ENCODE measurements at regions of chr19 and their contacts with region 1.

Region 1: DNA sequence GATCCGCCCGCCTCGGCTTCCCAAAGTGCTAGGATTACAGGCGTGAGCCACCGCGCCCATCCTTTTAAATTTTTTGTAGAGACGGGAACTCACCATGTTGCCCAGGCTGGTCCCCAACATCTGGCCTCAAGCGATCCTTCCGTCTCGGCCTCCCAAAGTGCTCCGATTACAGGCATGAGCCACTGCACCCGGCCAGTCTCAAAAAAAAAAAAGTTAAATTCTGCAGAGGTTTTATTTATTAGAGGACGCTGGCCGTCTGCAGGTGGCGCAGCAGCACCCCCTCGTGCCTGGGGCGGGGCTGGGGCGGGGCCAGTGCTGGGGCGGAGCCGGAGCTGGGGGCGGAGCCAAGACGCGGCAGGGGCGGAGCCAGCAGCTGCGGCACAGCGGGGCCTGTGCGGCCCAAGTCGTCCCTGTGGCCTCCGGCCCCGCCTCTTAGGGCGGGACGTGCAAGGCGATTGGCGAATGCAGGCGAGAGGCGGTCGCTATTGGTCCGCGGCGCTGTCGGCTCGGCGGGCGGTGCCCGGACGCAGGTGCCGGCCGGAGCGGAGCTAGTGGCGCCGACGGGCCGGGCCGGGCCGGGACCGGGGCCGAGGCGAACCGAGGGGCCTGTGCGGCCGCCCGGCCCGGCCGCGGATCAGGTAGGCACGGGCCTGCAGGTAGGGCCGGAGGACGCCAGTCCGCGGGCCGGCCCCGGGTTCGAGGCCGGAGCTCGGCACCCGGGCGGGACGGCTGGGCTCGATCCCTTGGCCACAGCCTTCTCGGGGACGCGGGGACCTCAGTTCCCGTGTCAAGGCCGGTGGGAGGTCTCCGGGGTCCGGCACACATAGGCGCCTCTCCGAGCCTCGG is at the start of gene MARCHF2:
- DNase-seq: peak; percentile 95
- H3K4me3 Mint-ChIP-seq: peak within 1 kb of the TSS; percentile 56
- H3K27ac Mint-ChIP-seq: peak within 1 kb of the TSS; percentile 16
- H3K4me1 Mint-ChIP-seq: peaks cover 11% of the 10 kb centered on the region
- H3K27me3 Mint-ChIP-seq: no peaks in the 10 kb centered on the region
- total RNA-seq, gene MARCHF2: 8.1 and 9.6 TPM in 2 replicates

Region 2: GRCh38 chr19:8444645-8445487 is 31.9 kb after region 1 on chr19 and contains the start of gene HNRNPM:
- intact Hi-C with region 1: loop called (anchors 1 kb)
- DNase-seq: peak; percentile 100
- H3K4me3 Mint-ChIP-seq: peak within 1 kb of the TSS; percentile 95
- H3K27ac Mint-ChIP-seq: peak within 1 kb of the TSS; percentile 98
- H3K4me1 Mint-ChIP-seq: peaks cover 40% of the 10 kb centered on the region
- H3K27me3 Mint-ChIP-seq: peaks cover 1% of the 10 kb centered on the region
- total RNA-seq, gene HNRNPM: 323 and 331 TPM in 2 replicates

Region 3: DNA sequence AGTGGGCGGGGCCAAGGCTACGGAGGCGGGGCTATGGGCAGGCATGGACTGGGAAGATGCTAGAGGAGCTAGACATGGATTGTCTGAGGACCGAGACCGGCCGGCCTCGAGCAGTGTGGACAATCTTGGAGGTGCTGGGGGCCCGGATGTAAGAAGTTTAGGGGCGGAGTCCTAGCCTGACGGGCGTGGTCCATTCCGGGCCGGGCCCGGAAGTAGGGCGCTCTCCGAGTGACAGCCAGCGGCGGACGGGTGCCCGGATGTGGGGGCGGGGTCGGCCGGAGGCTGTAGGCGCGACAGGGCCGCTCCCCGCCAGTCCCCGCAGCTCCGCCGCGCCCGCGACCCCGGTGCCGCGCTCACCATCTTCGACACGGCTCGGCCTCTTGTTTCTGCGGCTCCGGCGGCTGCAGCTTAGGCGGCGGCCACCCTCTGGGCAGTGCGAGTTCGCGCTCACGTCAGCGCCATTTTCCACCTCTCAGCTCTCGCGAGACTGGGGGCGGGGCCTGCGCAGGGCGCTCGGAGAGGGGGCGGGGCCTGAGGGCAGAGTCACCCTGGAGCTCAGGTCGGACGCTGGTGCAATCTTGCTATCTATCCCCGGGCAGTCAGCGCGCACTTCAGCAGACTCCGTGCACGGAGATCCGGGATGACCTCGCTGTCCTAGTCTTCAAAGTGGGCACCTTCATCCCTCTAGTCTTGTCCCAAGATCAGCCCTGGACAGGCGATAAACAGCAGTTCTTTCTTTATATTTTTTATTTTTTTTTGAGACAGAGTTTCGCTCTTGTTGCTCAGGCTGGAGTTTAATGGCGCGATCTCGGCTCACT is 100.9 kb after region 1 on chr19 and contains the start of gene ZNF414:
- intact Hi-C with region 1: loop called (anchors 1 kb)
- DNase-seq: peak; percentile 92
- H3K4me3 Mint-ChIP-seq: peak within 1 kb of the TSS; percentile 93
- H3K27ac Mint-ChIP-seq: peak within 1 kb of the TSS; percentile 98
- H3K4me1 Mint-ChIP-seq: peaks cover 52% of the 10 kb centered on the region
- H3K27me3 Mint-ChIP-seq: no peaks in the 10 kb centered on the region
- total RNA-seq, gene ZNF414: 22.1 and 23.6 TPM in 2 replicates

Region 4: GRCh38 chr19:8592231-8593009 is 179.4 kb after region 1 on chr19:
- intact Hi-C with region 1: loop called (anchors 1 kb)
- DNase-seq: peak; percentile 80
- H3K4me3 Mint-ChIP-seq: peak overlapping the region; percentile 68
- H3K27ac Mint-ChIP-seq: peak overlapping the region; percentile 24
- H3K4me1 Mint-ChIP-seq: peaks cover 8% of the 10 kb centered on the region
- H3K27me3 Mint-ChIP-seq: peaks cover 12% of the 10 kb centered on the region

Measured in activated T-helper 1 cell treated with anti-CD3 and anti-CD28 coated beads, Interleukin-12 subunit alpha, Interleukin-12 subunit beta, Interleukin-2, Interleukin-4 antibody, amounts not matched to agents 30 ng/mL and 10 ng/mL and 1 ng/mL, durations not matched to agents 14 hours and 24 hours and 36 hours (primary cell).